CD8-positive, alpha-beta memory T cell (primary cell): ENCODE measurements at regions of chr5 and their contacts with region 1.

Region 1: GRCh38 chr5:68239487-68239886 is 23.9 kb downstream of the PIK3R1 start:
- DNase-seq: peak; percentile 65 to 88 (median 81)
- H3K4me3 ChIP-seq: no peak overlapping the region
- H3K4me3 Mint-ChIP-seq: peak overlapping the region; percentile 15 to 82 (median 66)
- H3K27ac ChIP-seq: no peak overlapping the region
- H3K27ac Mint-ChIP-seq: peak overlapping the region; percentile 79 to 94 (median 88)
- H3K4me1 ChIP-seq: peaks cover 71% of the 10 kb centered on the region
- H3K4me1 Mint-ChIP-seq: peaks cover 78 to 94% (median 94%) of the 10 kb centered on the region in 3 donors
- H3K27me3 ChIP-seq: no peaks in the 10 kb centered on the region
- H3K27me3 Mint-ChIP-seq: no peaks in the 10 kb centered on the region

Region 2: GRCh38 chr5:68196876-68197275 is 42.6 kb before region 1 on chr5:
- CTCF ChIA-PET with region 1: no interaction called
- POLR2A ChIA-PET with region 1: interaction called, 12 read pairs
- DNase-seq: no peak
- H3K4me3 ChIP-seq: no peak overlapping the region
- H3K4me3 Mint-ChIP-seq: peak overlapping the region in 1 of 7 donors; percentile 13
- H3K27ac ChIP-seq: no peak overlapping the region
- H3K27ac Mint-ChIP-seq: no peak overlapping the region
- H3K4me1 ChIP-seq: no peaks in the 10 kb centered on the region
- H3K4me1 Mint-ChIP-seq: peaks cover 0 to 12% (median 5%) of the 10 kb centered on the region in 3 donors
- H3K27me3 ChIP-seq: no peaks in the 10 kb centered on the region
- H3K27me3 Mint-ChIP-seq: peaks cover 0 to 3% of the 10 kb centered on the region in 2 donors

Region 3: GRCh38 chr5:68315679-68316271 is 76.3 kb after region 1 on chr5:
- CTCF ChIA-PET with region 1: no interaction called
- POLR2A ChIA-PET with region 1: no interaction called
- DNase-seq: peak in 3 of 5 donors; percentile 13 to 51 (median 18)
- H3K4me3 ChIP-seq: no peak overlapping the region
- H3K4me3 Mint-ChIP-seq: no peak overlapping the region
- H3K27ac ChIP-seq: no peak overlapping the region
- H3K27ac Mint-ChIP-seq: peak overlapping the region in 2 of 8 donors; percentile 12 to 17
- H3K4me1 ChIP-seq: peaks cover 8% of the 10 kb centered on the region
- H3K4me1 Mint-ChIP-seq: peaks cover 10 to 15% (median 14%) of the 10 kb centered on the region in 3 donors
- H3K27me3 ChIP-seq: no peaks in the 10 kb centered on the region
- H3K27me3 Mint-ChIP-seq: no peaks in the 10 kb centered on the region

Region 4: DNA sequence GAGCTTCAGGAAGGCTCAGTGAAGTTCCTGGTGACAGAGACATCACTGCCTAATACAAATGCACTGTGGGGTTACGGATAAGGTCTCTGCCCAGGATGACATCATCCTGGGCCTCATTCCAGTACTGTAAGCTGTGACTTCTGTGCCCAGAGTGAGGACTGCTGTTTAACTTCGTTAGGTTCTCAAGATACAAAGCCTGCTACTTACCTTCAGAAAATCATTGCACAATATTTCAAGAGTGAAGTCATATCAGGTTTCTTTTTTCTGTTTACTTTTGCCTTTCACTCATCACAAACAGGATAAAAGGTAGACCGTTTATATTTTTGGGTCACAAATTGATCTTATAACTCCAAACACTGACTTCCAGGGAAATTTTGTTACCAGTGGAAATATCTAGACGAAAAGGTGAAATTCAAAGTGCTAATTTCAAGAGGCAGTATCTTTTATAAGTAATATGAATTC is 217.3 kb after region 1 on chr5:
- CTCF ChIA-PET with region 1: no interaction called
- POLR2A ChIA-PET with region 1: no interaction called
- DNase-seq: no peak
- H3K4me3 ChIP-seq: no peak overlapping the region
- H3K4me3 Mint-ChIP-seq: no peak overlapping the region
- H3K27ac ChIP-seq: no peak overlapping the region
- H3K27ac Mint-ChIP-seq: no peak overlapping the region
- H3K4me1 ChIP-seq: peaks cover 6% of the 10 kb centered on the region
- H3K4me1 Mint-ChIP-seq: peaks cover 13 to 22% (median 20%) of the 10 kb centered on the region in 3 donors
- H3K27me3 ChIP-seq: no peaks in the 10 kb centered on the region
- H3K27me3 Mint-ChIP-seq: no peaks in the 10 kb centered on the region